Naive thymus-derived CD4-positive, alpha-beta T cell (primary cell): ENCODE measurements at regions of chr2 and their contacts with region 1.

Region 1: GRCh38 chr2:27322766-27323595 is at the start of gene MPV17:
- DNase-seq: peak; percentile 65 to 87 (median 82)
- ATAC-seq: peak; percentile 98
- H3K4me3 ChIP-seq: peak within 1 kb of the TSS; percentile 99
- H3K4me3 Mint-ChIP-seq: peak within 1 kb of the TSS; percentile 91 to 100 (median 99)
- H3K27ac ChIP-seq: peak within 1 kb of the TSS; percentile 95
- H3K27ac Mint-ChIP-seq: peak within 1 kb of the TSS; percentile 93 to 100 (median 99)
- H3K4me1 ChIP-seq: peaks cover 17 to 22% of the 10 kb centered on the region in 2 donors
- H3K4me1 Mint-ChIP-seq: peaks cover 14 to 30% (median 23%) of the 10 kb centered on the region in 7 donors
- H3K27me3 ChIP-seq: no peaks in the 10 kb centered on the region
- H3K27me3 Mint-ChIP-seq: no peaks in the 10 kb centered on the region
- total RNA-seq, gene MPV17: 55.7 to 119 (median 94.4) TPM

Region 2: GRCh38 chr2:26785431-26786206 is 537.4 kb before region 1 on chr2 and contains the start of gene CENPA:
- CTCF ChIA-PET with region 1: no interaction called
- POLR2A ChIA-PET with region 1: no interaction called
- intact Hi-C with region 1: loop called in 1 of 2 experiments (anchors 1 kb)
- DNase-seq: peak; percentile 86 to 98 (median 96)
- ATAC-seq: peak; percentile 100
- H3K4me3 ChIP-seq: peak within 1 kb of the TSS; percentile 78
- H3K4me3 Mint-ChIP-seq: peak within 1 kb of the TSS; percentile 81 to 97 (median 88)
- H3K27ac ChIP-seq: peak within 1 kb of the TSS; percentile 60
- H3K27ac Mint-ChIP-seq: peak within 1 kb of the TSS; percentile 65 to 97 (median 89)
- H3K4me1 ChIP-seq: peaks cover 0 to 4% of the 10 kb centered on the region in 2 donors
- H3K4me1 Mint-ChIP-seq: peaks cover 10 to 34% (median 11%) of the 10 kb centered on the region in 7 donors
- H3K27me3 ChIP-seq: no peaks in the 10 kb centered on the region
- H3K27me3 Mint-ChIP-seq: peaks cover 0 to 26% (median 24%) of the 10 kb centered on the region in 5 donors
- total RNA-seq, gene CENPA: 0.37 to 25.6 (median 0.73) TPM in 3 of 5 experiments, not detected in the others

Region 3: GRCh38 chr2:27217217-27218121 is 105.5 kb before region 1 on chr2 and contains the start of gene CAD:
- CTCF ChIA-PET with region 1: no interaction called
- POLR2A ChIA-PET with region 1: interaction called, 5 read pairs
- intact Hi-C with region 1: loop called (anchors 1 kb)
- DNase-seq: peak; percentile 71 to 90 (median 80)
- ATAC-seq: peak; percentile 87
- H3K4me3 ChIP-seq: peak within 1 kb of the TSS; percentile 68
- H3K4me3 Mint-ChIP-seq: peak within 1 kb of the TSS; percentile 90 to 98 (median 96)
- H3K27ac ChIP-seq: peak within 1 kb of the TSS; percentile 85
- H3K27ac Mint-ChIP-seq: peak within 1 kb of the TSS; percentile 86 to 96 (median 94)
- H3K4me1 ChIP-seq: peaks cover 19 to 24% of the 10 kb centered on the region in 2 donors
- H3K4me1 Mint-ChIP-seq: peaks cover 26 to 52% (median 45%) of the 10 kb centered on the region in 7 donors
- H3K27me3 ChIP-seq: no peaks in the 10 kb centered on the region
- H3K27me3 Mint-ChIP-seq: no peaks in the 10 kb centered on the region
- total RNA-seq, gene CAD: 34.4 to 65.7 (median 45.4) TPM

Region 4: DNA sequence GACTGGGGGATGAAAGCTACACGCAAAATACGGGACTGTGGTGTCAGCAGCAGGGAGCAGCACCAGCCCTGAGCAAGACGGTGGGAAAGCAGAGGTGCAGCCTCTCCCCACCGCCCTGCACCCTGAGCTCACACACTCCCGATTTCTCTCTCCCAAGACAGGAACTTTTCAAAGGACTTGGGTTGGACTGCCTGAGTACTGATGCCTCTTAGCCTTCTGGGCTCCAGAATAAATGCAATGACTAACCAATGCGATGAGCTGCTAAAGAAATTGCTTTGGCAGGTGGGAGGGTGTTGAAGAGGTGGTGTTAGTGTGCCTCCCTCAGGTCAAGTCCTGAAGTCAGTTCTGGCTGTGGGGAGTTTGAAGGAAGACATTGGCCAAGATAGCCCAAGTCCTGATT is 31.1 kb before region 1 on chr2:
- CTCF ChIA-PET with region 1: no interaction called
- POLR2A ChIA-PET with region 1: no interaction called
- intact Hi-C with region 1: no loop called
- DNase-seq: no peak
- ATAC-seq: no peak
- H3K4me3 ChIP-seq: no peak overlapping the region
- H3K4me3 Mint-ChIP-seq: no peak overlapping the region
- H3K27ac ChIP-seq: no peak overlapping the region
- H3K27ac Mint-ChIP-seq: no peak overlapping the region
- H3K4me1 ChIP-seq: no peaks in the 10 kb centered on the region
- H3K4me1 Mint-ChIP-seq: peaks cover 0 to 2% (median 0%) of the 10 kb centered on the region in 7 donors
- H3K27me3 ChIP-seq: no peaks in the 10 kb centered on the region
- H3K27me3 Mint-ChIP-seq: peaks cover 7 to 55% (median 19%) of the 10 kb centered on the region in 5 donors

Region 5: GRCh38 chr2:27303093-27304025 is 19.6 kb before region 1 on chr2:
- CTCF ChIA-PET with region 1: interaction called, 9 read pairs
- POLR2A ChIA-PET with region 1: interaction called, 11 read pairs
- intact Hi-C with region 1: no loop called
- DNase-seq: peak in 8 of 9 donors; percentile 32 to 62 (median 54)
- ATAC-seq: peak; percentile 76
- H3K4me3 ChIP-seq: peak overlapping the region; percentile 43
- H3K4me3 Mint-ChIP-seq: peak overlapping the region; percentile 67 to 85 (median 80)
- H3K27ac ChIP-seq: peak overlapping the region; percentile 42
- H3K27ac Mint-ChIP-seq: peak overlapping the region in 7 of 9 donors; percentile 18 to 83 (median 54)
- H3K4me1 ChIP-seq: peaks cover 0 to 6% of the 10 kb centered on the region in 2 donors
- H3K4me1 Mint-ChIP-seq: peaks cover 0 to 11% (median 9%) of the 10 kb centered on the region in 7 donors
- H3K27me3 ChIP-seq: peaks cover 0 to 6% of the 10 kb centered on the region in 2 donors
- H3K27me3 Mint-ChIP-seq: peaks cover 13 to 34% (median 19%) of the 10 kb centered on the region in 5 donors

Region 6: GRCh38 chr2:27380626-27381545 is 57.9 kb after region 1 on chr2 and contains the start of gene ZNF513:
- CTCF ChIA-PET with region 1: no interaction called
- POLR2A ChIA-PET with region 1: interaction called, 10 read pairs
- intact Hi-C with region 1: no loop called
- DNase-seq: peak; percentile 71 to 88 (median 81)
- ATAC-seq: peak; percentile 97
- H3K4me3 ChIP-seq: peak within 1 kb of the TSS; percentile 67
- H3K4me3 Mint-ChIP-seq: peak within 1 kb of the TSS; percentile 85 to 94 (median 90)
- H3K27ac ChIP-seq: peak within 1 kb of the TSS; percentile 85
- H3K27ac Mint-ChIP-seq: peak within 1 kb of the TSS; percentile 88 to 97 (median 94)
- H3K4me1 ChIP-seq: peaks cover 9 to 10% of the 10 kb centered on the region in 2 donors
- H3K4me1 Mint-ChIP-seq: peaks cover 18 to 33% (median 30%) of the 10 kb centered on the region in 7 donors
- H3K27me3 ChIP-seq: no peaks in the 10 kb centered on the region
- H3K27me3 Mint-ChIP-seq: no peaks in the 10 kb centered on the region
- total RNA-seq, gene ZNF513: 15.6 to 23.2 (median 19.2) TPM

Region 7: DNA sequence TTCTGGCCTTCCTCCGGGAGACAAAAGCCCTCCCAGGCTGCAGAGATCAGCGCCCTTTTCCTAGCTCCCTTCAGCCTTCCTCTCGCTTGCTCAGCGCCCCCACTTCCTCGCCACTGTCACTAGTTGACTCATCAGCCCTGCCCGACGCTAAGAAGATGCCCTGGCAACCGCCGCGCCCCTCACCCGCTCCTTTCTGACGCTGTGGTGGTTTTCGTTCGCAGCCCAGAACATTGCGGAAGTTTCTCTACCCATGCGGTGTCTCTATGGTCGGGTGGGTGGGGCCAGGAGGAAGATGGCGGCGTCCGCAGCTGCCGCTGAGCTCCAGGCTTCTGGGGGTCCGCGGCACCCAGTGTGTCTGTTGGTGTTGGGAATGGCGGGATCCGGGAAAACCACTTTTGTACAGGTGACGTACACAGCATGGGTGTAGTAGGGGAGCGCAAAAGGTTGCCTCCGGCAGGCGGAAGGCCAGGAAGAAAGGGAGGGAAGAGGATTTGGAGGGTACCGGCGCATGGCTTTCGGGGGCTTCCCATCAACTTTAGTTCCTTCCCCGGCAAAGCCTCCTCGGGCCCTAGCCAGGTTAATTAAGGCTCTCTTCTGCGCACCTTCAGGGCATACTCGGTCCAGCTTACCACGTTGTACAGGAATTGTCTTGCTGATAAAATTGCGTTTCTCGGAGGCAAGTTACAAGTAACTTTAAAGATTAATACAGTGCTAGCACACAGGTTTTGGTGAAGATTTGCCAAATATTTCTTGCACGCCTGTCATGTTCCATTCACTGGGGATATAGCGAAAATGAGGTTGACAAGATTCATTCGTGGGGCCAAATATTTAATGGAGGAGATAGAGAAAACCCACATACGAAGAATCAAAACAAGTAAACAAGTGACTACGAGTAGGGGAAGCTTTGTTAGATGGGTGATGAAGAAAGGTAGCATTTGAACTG is 306.1 kb after region 1 on chr2 and contains the starts of genes CCDC121 and GPN1:
- CTCF ChIA-PET with region 1: no interaction called
- POLR2A ChIA-PET with region 1: no interaction called
- intact Hi-C with region 1: loop called in 1 of 2 experiments (anchors 2 kb)
- DNase-seq: peak; percentile 79 to 96 (median 93)
- ATAC-seq: peak; percentile 99
- H3K4me3 ChIP-seq: peak within 1 kb of the TSS; percentile 92
- H3K4me3 Mint-ChIP-seq: no peak within 1 kb of the TSS
- H3K27ac ChIP-seq: peak within 1 kb of the TSS; percentile 92
- H3K27ac Mint-ChIP-seq: peak within 1 kb of the TSS in 5 of 9 donors; percentile 16 to 72 (median 59)
- H3K4me1 ChIP-seq: peaks cover 11 to 13% of the 10 kb centered on the region in 2 donors
- H3K4me1 Mint-ChIP-seq: peaks cover 1 to 33% (median 22%) of the 10 kb centered on the region in 7 donors
- H3K27me3 ChIP-seq: no peaks in the 10 kb centered on the region
- H3K27me3 Mint-ChIP-seq: no peaks in the 10 kb centered on the region
- total RNA-seq, gene CCDC121: 0.61 to 2.7 (median 1.9) TPM
- total RNA-seq, gene GPN1: 27.8 to 45.5 (median 28.9) TPM